Esophagus muscularis mucosa (tissue), 4 donors: ENCODE measurements at regions of chr4 and their contacts with region 1.

Region 1: DNA sequence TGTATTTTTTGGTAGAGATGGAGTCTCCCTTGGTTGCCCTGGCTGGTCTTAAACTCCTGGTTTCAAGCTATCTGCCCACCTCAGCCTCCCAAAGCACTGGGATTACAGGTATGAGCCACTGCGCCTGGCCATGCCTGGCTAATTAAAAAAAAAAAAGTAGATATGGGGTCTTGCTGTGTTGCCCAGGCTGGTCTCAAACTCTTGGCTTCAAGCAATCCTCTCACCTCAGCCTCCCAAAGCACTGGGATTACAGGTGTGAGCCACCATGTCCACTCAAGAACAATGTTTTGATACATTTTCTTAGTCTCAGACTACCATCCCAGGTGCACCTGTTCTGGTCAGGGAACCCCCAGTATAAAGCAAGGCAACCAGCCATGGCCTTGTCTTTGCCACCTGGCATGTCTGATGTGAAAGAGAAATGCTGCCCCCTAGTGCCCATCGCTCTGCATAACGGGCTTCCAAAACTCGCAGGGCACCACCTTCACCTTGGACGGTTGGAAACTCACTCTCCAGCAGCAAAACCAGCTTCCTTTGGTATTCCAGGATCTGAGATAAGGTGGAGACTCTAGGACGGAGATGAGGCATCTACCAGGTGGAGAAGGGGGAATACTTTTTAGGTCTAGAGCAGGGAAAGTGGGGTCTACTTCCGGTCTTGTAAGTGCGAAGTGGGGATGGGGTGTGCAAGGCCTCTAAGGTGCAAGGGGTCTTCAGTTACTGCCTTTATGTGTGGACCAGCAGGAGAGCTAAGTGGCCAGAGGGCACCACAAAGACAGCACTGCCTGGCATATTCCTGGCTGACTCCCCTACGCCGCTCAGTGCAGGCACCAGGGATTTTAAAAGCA is 47.7 kb upstream of the AFAP1 start:
- DNase-seq: peak; percentile 95
- H3K4me3 ChIP-seq: no peak overlapping the region
- H3K27ac ChIP-seq: no peak overlapping the region
- H3K4me1 ChIP-seq: peaks cover 6 to 18% (median 14%) of the 10 kb centered on the region in 4 donors
- H3K27me3 ChIP-seq: no peaks in the 10 kb centered on the region
- CTCF ChIP-seq: peak; percentile 87 to 92 (median 92)
- EP300 ChIP-seq: no peak
- POLR2A ChIP-seq: no peak

Region 2: GRCh38 chr4:7761720-7762119 is 225.6 kb before region 1 on chr4:
- intact Hi-C with region 1: loop called (anchors 5 kb)
- DNase-seq: peak; percentile 94
- H3K4me3 ChIP-seq: no peak overlapping the region
- H3K27ac ChIP-seq: peak overlapping the region; percentile 66 to 79 (median 72)
- H3K4me1 ChIP-seq: peaks cover 11 to 50% (median 40%) of the 10 kb centered on the region in 4 donors
- H3K27me3 ChIP-seq: no peaks in the 10 kb centered on the region
- CTCF ChIP-seq: peak; percentile 85 to 95 (median 90)
- EP300 ChIP-seq: no peak
- POLR2A ChIP-seq: no peak

Region 3: GRCh38 chr4:7929118-7929951 is 58.0 kb before region 1 on chr4:
- intact Hi-C with region 1: loop called (anchors 5 kb)
- DNase-seq: peak; percentile 91
- H3K4me3 ChIP-seq: no peak overlapping the region
- H3K27ac ChIP-seq: peak overlapping the region; percentile 11 to 59 (median 50)
- H3K4me1 ChIP-seq: peaks cover 10 to 80% (median 57%) of the 10 kb centered on the region in 4 donors
- H3K27me3 ChIP-seq: no peaks in the 10 kb centered on the region
- CTCF ChIP-seq: peak; percentile 44 to 55 (median 45)
- EP300 ChIP-seq: no peak
- POLR2A ChIP-seq: no peak